ENCODE measurements at regions of chr15 and their contacts with region 1.

Region 1: DNA sequence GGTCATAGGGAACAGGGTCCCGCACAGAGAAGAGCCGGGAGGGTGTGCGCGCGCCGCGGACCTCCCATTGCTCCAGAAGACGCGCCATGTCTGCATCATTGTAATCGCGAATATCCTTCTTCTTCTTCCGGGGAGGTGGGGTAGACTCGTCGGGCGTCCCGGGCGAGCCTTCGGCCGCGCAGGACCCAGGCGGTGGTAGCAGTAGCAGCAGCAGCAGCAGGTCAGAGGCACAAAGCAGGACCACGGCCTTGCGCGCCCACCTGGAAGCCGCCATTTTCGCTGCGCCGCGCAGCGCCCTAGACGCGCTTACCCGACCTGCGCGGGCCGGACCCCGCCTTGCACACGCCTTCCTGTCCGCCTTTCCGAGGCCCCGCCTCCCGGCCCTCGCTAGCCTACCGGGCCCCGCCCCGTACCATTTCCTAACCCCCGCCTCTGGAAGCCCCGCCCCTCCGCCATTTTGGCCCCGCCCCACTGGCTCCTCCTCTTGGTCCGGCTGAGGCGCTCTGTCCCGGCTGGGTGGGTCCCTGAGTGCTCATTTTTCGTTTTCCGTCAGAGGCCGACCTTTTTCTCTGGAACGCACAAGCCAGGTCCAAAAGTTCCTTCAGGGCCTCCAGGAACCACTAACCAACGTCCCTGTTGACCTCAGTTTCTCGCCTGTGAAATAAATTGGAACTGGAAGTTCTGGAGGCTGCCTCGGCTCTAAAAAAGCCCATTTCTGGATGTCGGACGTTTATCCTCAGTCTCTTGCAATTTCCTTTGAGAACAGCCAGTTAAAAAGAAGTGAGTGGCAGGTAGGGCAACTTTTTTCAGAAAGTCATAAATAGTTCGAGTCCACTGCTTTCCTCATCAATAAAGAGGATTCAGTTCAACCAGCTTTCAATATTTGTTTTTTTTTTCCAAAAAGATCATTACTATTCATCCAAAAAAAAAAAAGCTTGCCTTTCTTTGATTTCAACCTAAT is at the start of gene MESD:
- DNase-seq: peak; percentile 86 to 98
- H3K4me3 ChIP-seq: peak within 1 kb of the TSS; percentile 70 to 95
- H3K27ac ChIP-seq: peak within 1 kb of the TSS; percentile 91 to 92
- H3K4me1 ChIP-seq: peaks cover 0 to 29% of the 10 kb centered on the region in 2 donors
- H3K27me3 ChIP-seq: no peaks in the 10 kb centered on the region
- CTCF ChIP-seq: no peak
- total RNA-seq, gene MESD: 6.4 TPM

Region 2: DNA sequence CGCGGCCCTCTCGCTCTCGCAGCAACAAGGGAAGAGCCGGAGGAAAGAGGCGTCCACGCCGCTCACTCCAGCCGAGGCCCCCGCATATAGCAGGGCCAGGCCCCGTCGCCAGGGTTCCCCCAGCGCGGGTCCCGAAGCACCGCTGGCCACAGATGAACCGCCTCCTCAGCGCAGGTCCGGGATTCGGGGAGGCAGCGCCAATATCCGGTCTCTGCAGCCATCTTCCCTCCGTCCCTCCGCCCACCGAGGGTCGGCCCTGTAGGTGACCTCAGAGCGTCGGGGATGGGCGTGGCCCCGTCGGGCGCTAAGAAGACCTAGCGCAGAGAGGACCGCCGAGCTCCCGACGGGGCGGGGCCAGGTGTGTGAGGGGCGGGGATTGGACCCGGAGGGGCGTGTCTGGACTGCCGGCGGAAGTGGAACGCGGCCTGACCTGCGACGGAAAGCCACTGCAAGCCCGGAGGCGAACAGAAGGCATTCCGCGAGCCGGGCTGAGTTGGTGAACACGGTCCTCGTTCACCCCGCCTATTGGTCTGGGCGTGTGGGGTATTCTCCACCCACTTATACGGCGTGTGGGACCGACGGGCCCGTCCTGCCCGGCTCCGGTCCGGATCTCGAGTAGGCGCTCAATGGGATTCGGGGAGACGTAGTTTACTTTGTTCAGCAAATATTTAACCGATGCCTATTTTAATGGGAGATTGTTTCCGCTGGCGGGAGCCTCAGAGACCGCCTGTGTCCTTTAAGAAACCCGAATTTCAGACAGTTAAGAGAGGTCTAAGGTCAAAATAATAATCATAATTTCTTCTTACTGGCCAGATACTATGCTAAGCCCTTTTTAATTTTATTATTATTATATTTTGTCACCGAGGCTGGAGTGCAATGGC is 1066.0 kb before region 1 on chr15:
- intact Hi-C with region 1: loop called (anchors 10 kb)
- DNase-seq: peak; percentile 82 to 96
- H3K4me3 ChIP-seq: peak overlapping the region; percentile 79 to 86
- H3K27ac ChIP-seq: peak overlapping the region; percentile 95 to 96
- H3K4me1 ChIP-seq: peaks cover 5 to 6% of the 10 kb centered on the region in 2 donors
- H3K27me3 ChIP-seq: no peaks in the 10 kb centered on the region
- CTCF ChIP-seq: no peak

Region 3: GRCh38 chr15:80058851-80059785 is 930.7 kb before region 1 on chr15 and contains the start of gene ZFAND6:
- intact Hi-C with region 1: loop called (anchors 10 kb)
- DNase-seq: peak; percentile 78 to 97
- H3K4me3 ChIP-seq: peak within 1 kb of the TSS; percentile 87 to 96
- H3K27ac ChIP-seq: peak within 1 kb of the TSS; percentile 77 to 94
- H3K4me1 ChIP-seq: peaks cover 0 to 22% of the 10 kb centered on the region in 2 donors
- H3K27me3 ChIP-seq: no peaks in the 10 kb centered on the region
- CTCF ChIP-seq: peak in 1 of 3 experiments; percentile 6
- total RNA-seq, gene ZFAND6: 49.6 TPM

Region 4: GRCh38 chr15:80934761-80935221 is 55.0 kb before region 1 on chr15:
- intact Hi-C with region 1: loop called (anchors 2 kb)
- DNase-seq: no peak
- H3K4me3 ChIP-seq: no peak overlapping the region
- H3K27ac ChIP-seq: no peak overlapping the region
- H3K4me1 ChIP-seq: peaks cover 0 to 16% of the 10 kb centered on the region in 2 donors
- H3K27me3 ChIP-seq: no peaks in the 10 kb centered on the region
- CTCF ChIP-seq: no peak

Region 5: GRCh38 chr15:81000624-81001151 is 10.9 kb after region 1 on chr15 and contains the start of gene TLNRD1:
- intact Hi-C with region 1: loop called (anchors 1 kb)
- DNase-seq: peak; percentile 65 to 94
- H3K4me3 ChIP-seq: peak within 1 kb of the TSS; percentile 91 to 92
- H3K27ac ChIP-seq: peak within 1 kb of the TSS; percentile 93 to 99
- H3K4me1 ChIP-seq: peaks cover 7 to 22% of the 10 kb centered on the region in 2 donors
- H3K27me3 ChIP-seq: no peaks in the 10 kb centered on the region
- CTCF ChIP-seq: no peak
- total RNA-seq, gene TLNRD1: 59.3 TPM

Region 6: DNA sequence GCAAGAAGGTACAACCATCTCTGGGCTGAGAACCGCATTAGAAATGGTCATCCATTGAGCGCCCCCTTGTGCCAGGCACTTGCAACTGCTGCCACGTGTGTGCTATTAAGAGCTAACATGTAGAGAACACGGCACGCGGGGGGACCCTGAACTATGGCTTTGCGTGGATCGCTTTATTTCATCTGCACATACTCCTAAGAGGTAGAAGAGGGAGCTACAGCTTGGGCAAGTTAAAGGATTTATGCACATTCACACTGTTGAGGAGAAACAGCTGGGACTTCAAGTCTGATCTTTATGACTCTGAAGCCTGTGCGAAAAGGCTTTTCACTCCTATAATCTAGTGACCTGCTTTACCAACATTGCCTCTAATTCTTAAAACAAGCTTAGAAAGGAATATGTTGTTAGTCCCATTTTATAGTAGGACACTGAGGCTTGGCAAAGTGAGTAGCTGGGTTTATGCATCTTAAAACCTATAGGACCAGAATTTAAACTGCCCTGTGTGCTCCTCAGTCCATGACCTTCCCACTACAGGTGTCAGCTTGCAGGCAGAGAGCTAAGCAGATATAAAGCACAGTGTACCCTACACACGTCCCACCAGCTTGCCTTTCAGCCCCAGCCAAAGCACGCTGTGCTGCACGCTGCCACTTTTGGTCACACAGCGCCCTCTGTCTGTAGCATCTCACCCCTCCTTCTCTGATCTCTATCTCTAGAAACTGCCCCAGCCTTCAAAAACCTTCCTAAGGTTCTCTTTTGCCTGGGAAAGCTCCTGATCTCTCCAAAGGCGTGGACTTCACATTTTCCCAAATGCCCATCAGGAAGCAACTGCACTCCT is 276.4 kb after region 1 on chr15:
- intact Hi-C with region 1: loop called (anchors 5 kb)
- DNase-seq: peak; percentile 38 to 85
- H3K4me3 ChIP-seq: peak overlapping the region; percentile 1 to 18
- H3K27ac ChIP-seq: no peak overlapping the region
- H3K4me1 ChIP-seq: peaks cover 0 to 5% of the 10 kb centered on the region in 2 donors
- H3K27me3 ChIP-seq: no peaks in the 10 kb centered on the region
- CTCF ChIP-seq: peak; percentile 68 to 89 (median 81)

Region 7: GRCh38 chr15:81312790-81313543 is 323.2 kb after region 1 on chr15:
- intact Hi-C with region 1: loop called (anchors 5 kb)
- DNase-seq: peak; percentile 75 to 95
- H3K4me3 ChIP-seq: no peak overlapping the region
- H3K27ac ChIP-seq: peak overlapping the region; percentile 55 to 69
- H3K4me1 ChIP-seq: peaks cover 12 to 18% of the 10 kb centered on the region in 2 donors
- H3K27me3 ChIP-seq: no peaks in the 10 kb centered on the region
- CTCF ChIP-seq: no peak

Measured in ascending aorta (tissue), 2 donors.